Caco-2 (cell line): ENCODE measurements at regions of chr10 and their contacts with region 1.

Region 1: GRCh38 chr10:13681098-13681497 is 94.3 kb downstream of the PRPF18 start:
- DNase-seq: peak; percentile 59 to 70
- H3K4me3 ChIP-seq: no peak overlapping the region
- H3K4me3 Mint-ChIP-seq: no peak overlapping the region
- H3K27ac Mint-ChIP-seq: no peak overlapping the region
- H3K4me1 ChIP-seq: peaks cover 10% of the 10 kb centered on the region
- H3K4me1 Mint-ChIP-seq: peaks cover 15% of the 10 kb centered on the region
- H3K27me3 ChIP-seq: no peaks in the 10 kb centered on the region
- H3K27me3 Mint-ChIP-seq: no peaks in the 10 kb centered on the region
- CTCF ChIP-seq: no peak

Region 2: GRCh38 chr10:13669182-13669865 is 11.8 kb before region 1 on chr10:
- CTCF ChIA-PET with region 1: no interaction called
- POLR2A ChIA-PET with region 1: no interaction called
- intact Hi-C with region 1: loop called (anchors 1 kb)
- DNase-seq: peak; percentile 52 to 69
- H3K4me3 ChIP-seq: no peak overlapping the region
- H3K4me3 Mint-ChIP-seq: peak overlapping the region; percentile 8
- H3K27ac Mint-ChIP-seq: peak overlapping the region; percentile 67
- H3K4me1 ChIP-seq: peaks cover 21% of the 10 kb centered on the region
- H3K4me1 Mint-ChIP-seq: peaks cover 26% of the 10 kb centered on the region
- H3K27me3 ChIP-seq: no peaks in the 10 kb centered on the region
- H3K27me3 Mint-ChIP-seq: no peaks in the 10 kb centered on the region
- CTCF ChIP-seq: no peak